Activated CD4-positive, alpha-beta T cell treated with anti-CD3 and anti-CD28 coated beads, Interleukin-2, amount 10 ng/mL, durations not matched to agents 24 days and 14 days (primary cell): ENCODE measurements at regions of chrX and their contacts with region 1.

Region 1: GRCh38 chrX:104189837-104190236 is 23.6 kb downstream of the FAM199X start:
- DNase-seq: no peak
- H3K4me3 Mint-ChIP-seq: no peak overlapping the region
- H3K27ac Mint-ChIP-seq: no peak overlapping the region
- H3K4me1 Mint-ChIP-seq: no peaks in the 10 kb centered on the region
- H3K27me3 Mint-ChIP-seq: no peaks in the 10 kb centered on the region

Region 2: GRCh38 chrX:103932133-103932532 is 257.7 kb before region 1 on chrX:
- intact Hi-C with region 1: no loop called
- DNase-seq: no peak
- H3K4me3 Mint-ChIP-seq: no peak overlapping the region
- H3K27ac Mint-ChIP-seq: peak overlapping the region; percentile 51
- H3K4me1 Mint-ChIP-seq: peaks cover 3% of the 10 kb centered on the region
- H3K27me3 Mint-ChIP-seq: no peaks in the 10 kb centered on the region

Region 3: DNA sequence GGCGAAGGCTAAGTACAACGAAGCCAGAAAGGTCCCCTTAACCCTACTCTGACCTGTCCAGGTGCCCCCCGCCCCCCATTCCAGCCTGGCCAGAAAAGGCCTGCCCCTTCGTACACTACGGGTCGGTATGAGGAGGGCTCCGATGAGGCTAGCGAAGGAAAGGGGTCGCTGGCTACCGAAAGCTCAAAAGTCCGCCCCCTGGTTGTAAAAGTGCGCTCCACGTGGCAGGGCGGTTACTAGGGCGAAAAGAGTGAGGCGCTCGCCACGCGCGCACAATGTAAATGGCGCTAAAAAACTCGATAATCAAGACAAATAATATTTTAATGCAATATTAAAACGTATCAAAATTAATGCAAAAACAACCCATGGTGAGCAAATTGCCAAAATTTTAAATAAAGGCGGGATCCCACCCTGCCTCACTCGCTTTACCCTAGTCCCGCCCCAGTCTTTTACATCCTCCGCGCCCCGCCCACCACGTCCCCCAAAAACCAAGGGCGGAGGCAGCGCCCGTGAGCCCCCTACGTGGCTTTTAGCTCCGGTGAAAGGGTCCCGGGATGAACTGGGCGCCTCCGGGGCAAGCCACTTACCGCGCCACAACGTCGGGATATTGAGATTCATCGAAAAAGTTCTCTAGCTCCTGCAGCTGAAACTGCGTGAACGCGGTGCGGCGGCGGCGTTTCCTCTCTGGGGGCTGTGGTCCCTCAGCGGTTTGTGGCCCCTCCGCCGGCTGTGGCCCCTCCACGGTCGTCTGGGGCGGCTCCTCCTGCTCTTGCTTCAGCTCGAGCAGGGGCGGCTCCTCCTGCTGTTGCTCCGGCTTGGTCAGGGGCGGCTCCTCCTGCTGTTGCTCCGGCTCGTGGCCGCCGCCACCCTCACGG is 64.0 kb after region 1 on chrX:
- intact Hi-C with region 1: no loop called
- DNase-seq: peak; percentile 51
- H3K4me3 Mint-ChIP-seq: peak overlapping the region; percentile 74
- H3K27ac Mint-ChIP-seq: no peak overlapping the region
- H3K4me1 Mint-ChIP-seq: peaks cover 5% of the 10 kb centered on the region
- H3K27me3 Mint-ChIP-seq: peaks cover 35% of the 10 kb centered on the region

Region 4: DNA sequence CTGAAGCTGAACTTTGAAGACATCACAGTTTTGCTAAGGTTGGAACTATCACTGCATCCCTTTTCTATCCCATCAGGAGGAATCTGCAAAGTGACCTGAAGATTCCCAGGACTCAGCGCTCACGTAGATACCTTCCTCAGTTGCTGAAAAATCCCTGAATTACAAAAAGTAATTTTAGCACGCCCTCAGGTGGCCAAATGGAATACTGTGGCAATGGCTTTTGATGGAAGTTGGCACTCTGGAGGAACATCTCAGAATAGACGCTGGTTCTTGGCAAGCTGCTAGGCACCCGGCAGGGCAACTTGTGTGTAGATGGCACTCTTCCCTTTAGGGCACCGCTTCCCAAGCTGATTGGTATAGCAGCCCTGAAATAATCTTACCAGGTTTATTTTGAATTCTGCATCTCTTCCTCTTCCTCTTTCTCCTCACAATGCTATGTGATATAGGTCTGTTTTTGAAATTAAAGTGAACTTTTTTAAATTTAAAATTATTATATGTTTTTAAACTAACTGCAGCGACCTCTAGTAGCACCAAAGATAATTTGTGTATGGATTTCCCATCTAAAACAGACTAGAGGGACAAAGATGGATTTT is 81.2 kb after region 1 on chrX:
- intact Hi-C with region 1: loop called (anchors 5 kb)
- DNase-seq: peak; percentile 68
- H3K4me3 Mint-ChIP-seq: no peak overlapping the region
- H3K27ac Mint-ChIP-seq: no peak overlapping the region
- H3K4me1 Mint-ChIP-seq: no peaks in the 10 kb centered on the region
- H3K27me3 Mint-ChIP-seq: peaks cover 6% of the 10 kb centered on the region